ENCODE measurements at regions of chr15 and their contacts with region 1.

Region 1: GRCh38 chr15:74781431-74782258 is at the start of gene CSK:
- DNase-seq: peak in 1 of 2 donors; percentile 93
- H3K4me3 ChIP-seq: peak within 1 kb of the TSS; percentile 82
- CTCF ChIP-seq: no peak
- POLR2A ChIP-seq: no peak
- total RNA-seq, gene CSK: 37.6 to 47.3 (median 45.4) TPM

Region 2: DNA sequence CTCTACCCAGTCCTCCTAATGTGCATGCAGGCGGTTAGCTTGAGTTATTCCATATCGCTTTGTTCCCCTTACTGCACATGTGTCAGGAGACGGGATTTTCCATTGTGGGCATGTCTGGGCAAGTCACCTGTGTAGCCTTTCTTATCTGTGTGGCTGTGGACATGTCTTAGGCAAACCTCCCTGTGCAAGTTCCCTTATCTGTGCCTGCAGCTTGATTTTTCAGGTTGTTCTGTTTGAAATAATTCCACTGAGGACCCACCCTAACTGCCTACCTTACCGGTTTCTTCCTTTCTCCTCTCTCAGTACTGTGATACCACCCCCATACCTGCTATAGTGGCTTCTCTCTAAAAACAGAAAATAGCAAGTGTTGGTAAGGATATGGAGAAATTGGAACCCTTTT is 1615.8 kb before region 1 on chr15:
- intact Hi-C with region 1: no loop called
- DNase-seq: no peak
- H3K4me3 ChIP-seq: no peak overlapping the region
- CTCF ChIP-seq: no peak
- POLR2A ChIP-seq: no peak

Region 3: GRCh38 chr15:74768771-74769342 is 12.8 kb before region 1 on chr15:
- intact Hi-C with region 1: no loop called
- DNase-seq: peak; percentile 53 to 92
- H3K4me3 ChIP-seq: no peak overlapping the region
- CTCF ChIP-seq: peak in 1 of 3 donors; percentile 68
- POLR2A ChIP-seq: no peak

Region 4: DNA sequence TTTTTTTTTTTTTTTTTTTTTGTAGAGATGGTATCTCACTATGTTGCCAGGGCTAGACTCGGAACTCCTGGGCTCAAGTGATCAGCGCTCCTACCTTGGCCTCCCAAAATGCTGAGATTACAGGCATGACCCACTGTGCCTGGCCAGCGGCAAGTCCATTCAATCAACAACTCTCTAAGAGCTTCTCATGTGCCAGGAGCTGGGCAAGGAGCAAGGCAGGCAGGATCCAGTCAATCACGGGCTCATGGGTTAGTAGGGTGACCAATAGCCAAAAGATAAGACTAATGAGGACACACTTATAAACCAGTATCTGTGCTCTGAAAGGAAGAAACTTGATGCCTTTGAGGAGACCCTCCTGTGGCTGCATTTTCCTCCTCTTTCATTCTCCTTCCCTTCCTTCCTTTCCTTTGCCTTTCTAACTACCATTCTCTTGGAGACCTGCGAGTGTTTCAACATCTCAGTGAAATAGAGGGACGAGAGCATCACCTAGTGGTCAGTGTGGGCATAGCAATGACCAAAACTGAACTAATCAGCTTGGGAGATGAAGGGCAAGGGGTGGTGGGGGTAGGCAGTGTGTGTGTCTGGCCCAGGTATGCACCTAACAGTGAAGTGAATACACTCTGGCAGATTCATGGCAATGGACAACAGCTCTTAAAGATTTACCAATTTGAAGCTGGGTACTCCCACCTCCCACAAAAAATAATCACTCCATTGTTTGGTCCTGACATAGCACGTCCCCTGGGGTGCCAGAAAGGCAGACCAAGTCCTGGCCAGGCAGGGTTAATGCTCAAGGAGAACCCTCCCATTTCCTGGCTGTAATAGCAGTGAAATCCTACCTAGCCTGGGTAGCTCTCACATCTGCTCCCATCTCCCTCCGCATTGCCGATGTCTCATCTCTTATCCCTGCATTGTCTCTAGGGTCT is 168.7 kb after region 1 on chr15:
- intact Hi-C with region 1: loop called (anchors 5 kb)
- DNase-seq: peak; percentile 82 to 94
- H3K4me3 ChIP-seq: no peak overlapping the region
- CTCF ChIP-seq: peak in 2 of 3 donors; percentile 69 to 99
- POLR2A ChIP-seq: no peak